ENCODE measurements at regions of chr4 and their contacts with region 1.

Region 1: GRCh38 chr4:137124278-137124932 is 407.9 kb downstream of the PCDH18 start:
- DNase-seq: no peak

Region 2: GRCh38 chr4:137524725-137525369 is 400.4 kb after region 1 on chr4:
- intact Hi-C with region 1: loop called (anchors 10 kb)
- DNase-seq: no peak

Region 3: GRCh38 chr4:137853435-137853834 is 729.0 kb after region 1 on chr4:
- intact Hi-C with region 1: loop called (anchors 10 kb)
- DNase-seq: no peak

Region 4: DNA sequence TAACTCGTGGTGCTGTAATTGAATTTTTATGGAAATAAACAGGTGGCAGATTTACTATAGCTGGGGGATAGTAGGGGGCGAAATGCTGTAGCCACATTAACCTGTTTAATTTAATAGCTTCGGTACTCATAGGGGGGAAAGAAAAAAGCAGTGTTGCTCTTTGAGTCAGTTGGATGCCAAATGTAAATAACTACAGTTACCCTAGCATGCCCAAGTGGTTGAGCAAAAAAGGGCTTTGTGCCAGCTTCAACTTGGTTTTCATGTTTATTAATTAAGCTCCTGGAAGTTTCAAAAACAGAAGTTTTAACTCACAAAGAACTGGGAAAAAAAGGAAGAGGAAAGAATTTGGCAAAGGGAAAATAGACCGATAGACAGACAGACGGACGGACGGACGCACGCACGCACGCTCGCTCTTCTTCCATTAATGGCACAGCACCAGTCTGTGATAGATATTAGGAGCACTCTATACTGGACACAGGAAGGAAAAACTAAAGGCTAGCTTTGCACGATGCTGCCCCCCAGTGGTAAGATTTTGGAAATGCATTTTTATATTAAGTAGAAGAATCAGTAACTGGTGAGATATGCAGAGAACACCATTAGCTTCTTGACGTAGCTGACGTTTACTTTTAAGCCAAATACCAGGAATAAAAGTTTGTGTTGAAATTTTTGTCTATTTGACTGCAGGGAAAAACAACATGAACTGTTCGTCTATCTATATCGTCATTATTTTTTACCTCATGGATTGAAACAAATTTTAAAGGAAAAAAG is 965.9 kb after region 1 on chr4:
- intact Hi-C with region 1: loop called (anchors 5 kb)
- DNase-seq: no peak